SK-MEL-5 (cell line): ENCODE measurements at regions of chr3 and their contacts with region 1.

Region 1: DNA sequence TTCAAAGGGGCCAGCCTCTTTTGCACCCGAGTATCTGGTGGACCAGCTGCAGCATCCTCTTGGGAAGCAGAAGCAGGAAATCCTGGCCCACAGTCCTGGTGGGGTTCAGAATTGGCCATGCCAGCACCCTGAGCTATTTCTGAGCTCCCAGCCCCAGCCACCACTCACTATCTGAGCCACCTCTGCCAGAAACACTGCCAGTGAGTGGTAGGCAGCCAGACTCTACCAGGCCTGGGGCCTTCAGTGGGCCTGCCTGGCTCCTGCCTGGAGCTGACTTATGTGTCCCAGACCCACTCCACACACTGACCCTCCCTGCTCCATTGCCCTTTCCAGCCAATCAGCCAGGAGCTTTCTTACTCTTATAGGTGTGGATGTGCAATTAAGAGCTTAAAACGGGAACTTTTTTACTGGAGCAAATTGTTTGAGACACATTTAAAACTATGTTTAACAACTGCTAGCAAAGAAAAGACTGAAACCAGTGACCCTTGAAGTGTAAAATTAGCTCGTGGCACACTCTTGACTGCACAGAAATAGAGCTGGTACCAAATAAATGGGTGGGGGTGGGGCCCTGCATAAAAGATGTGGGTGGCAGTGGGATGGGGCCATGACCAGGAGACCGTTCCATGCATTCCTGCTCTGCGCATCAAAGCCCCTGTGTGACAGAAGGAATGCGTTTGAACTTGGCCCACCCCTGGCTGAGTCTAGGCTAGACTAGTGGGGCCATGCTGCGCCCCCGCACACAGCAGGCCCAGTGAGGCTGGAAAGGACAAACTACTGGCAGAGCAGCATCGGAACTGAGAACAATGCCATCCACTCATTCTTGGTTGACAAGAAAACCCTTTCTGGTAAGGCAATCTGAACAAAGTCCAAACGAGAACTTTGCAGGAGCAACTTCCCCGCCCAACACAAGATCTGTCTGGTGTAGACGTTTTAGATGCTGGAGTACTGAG is 48.0 kb downstream of the CTNNB1 start:
- DNase-seq: no peak

Region 2: GRCh38 chr3:40042752-40043443 is 1204.4 kb before region 1 on chr3:
- in situ Hi-C with region 1: no loop called
- DNase-seq: peak; percentile 19

Region 3: DNA sequence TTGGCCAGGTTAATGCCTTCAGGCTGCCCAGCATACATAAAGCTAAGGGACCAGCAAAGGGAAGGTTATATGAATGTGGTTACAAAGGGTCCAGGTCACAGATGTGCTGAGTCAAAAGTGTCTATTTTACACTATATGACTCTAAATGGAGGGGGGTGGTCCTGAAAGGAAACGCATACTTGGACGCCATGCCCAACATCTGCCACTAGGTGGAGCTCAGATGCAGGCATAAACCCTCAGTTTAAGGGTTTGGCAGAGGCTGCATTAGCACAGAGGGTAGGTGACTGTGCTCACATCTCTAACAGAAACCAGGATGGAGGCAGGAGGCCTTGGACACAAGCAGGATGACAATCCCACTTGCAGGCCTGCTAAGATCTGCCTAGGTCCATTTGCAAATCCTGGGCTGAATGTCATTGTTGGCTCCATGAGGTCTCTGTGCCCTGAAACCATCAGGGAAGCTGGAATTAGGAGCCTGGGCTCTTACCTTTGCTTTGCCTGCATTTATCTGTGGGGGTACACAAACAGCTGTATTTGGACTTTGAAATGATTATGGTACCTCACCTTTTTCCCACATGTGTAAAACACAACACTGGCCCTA is 666.7 kb before region 1 on chr3:
- in situ Hi-C with region 1: loop called (anchors 25 kb)
- DNase-seq: peak; percentile 87

Region 4: GRCh38 chr3:41026394-41027177 is 220.7 kb before region 1 on chr3:
- in situ Hi-C with region 1: no loop called
- DNase-seq: peak; percentile 99

Region 5: GRCh38 chr3:41064070-41064469 is 183.3 kb before region 1 on chr3:
- in situ Hi-C with region 1: no loop called
- DNase-seq: no peak